CD8-positive, alpha-beta T cell (primary cell): ENCODE measurements at regions of chr1 and their contacts with region 1.

Region 1: GRCh38 chr1:153990468-153991150 is at the start of gene RPS27:
- DNase-seq: peak; percentile 72 to 98 (median 85)
- ATAC-seq: peak; percentile 85
- H3K4me3 ChIP-seq: peak within 1 kb of the TSS; percentile 95 to 97
- H3K4me3 Mint-ChIP-seq: peak within 1 kb of the TSS; percentile 98
- H3K27ac ChIP-seq: peak within 1 kb of the TSS; percentile 98 to 99
- H3K27ac Mint-ChIP-seq: peak within 1 kb of the TSS; percentile 99
- H3K4me1 ChIP-seq: peaks cover 43% of the 10 kb centered on the region
- H3K4me1 Mint-ChIP-seq: peaks cover 44% of the 10 kb centered on the region
- H3K27me3 ChIP-seq: no peaks in the 10 kb centered on the region
- H3K27me3 Mint-ChIP-seq: no peaks in the 10 kb centered on the region
- CTCF ChIP-seq: no peak
- total RNA-seq, gene RPS27: 6,306 to 6,659 TPM

Region 2: DNA sequence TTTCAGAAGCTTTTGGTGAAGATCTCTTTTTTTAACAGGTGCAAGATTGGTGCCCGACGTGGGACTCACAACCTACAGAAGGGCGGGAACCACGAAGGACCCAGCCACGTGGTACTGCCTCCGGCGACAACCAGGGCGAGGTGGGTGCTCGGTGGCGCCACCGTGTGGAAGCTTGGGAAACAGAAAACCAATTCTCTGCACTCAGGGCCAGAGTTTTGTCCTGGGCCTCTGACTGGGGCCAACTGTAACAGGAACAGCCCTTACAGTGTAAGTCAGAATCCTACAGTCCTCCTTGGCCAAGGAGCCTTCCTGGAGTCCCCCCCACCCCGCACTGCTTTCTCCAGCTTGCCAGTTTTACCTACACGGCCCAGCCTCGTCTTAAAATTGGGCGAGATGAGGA is 585.8 kb before region 1 on chr1:
- CTCF ChIA-PET with region 1: no interaction called
- POLR2A ChIA-PET with region 1: no interaction called
- intact Hi-C with region 1: no loop called
- DNase-seq: peak; percentile 12 to 64 (median 45)
- ATAC-seq: peak; percentile 55
- H3K4me3 ChIP-seq: no peak overlapping the region
- H3K4me3 Mint-ChIP-seq: no peak overlapping the region
- H3K27ac ChIP-seq: no peak overlapping the region
- H3K27ac Mint-ChIP-seq: no peak overlapping the region
- H3K4me1 ChIP-seq: peaks cover 8% of the 10 kb centered on the region
- H3K4me1 Mint-ChIP-seq: peaks cover 24% of the 10 kb centered on the region
- H3K27me3 ChIP-seq: no peaks in the 10 kb centered on the region
- H3K27me3 Mint-ChIP-seq: peaks cover 18% of the 10 kb centered on the region
- CTCF ChIP-seq: peak; percentile 46

Region 3: GRCh38 chr1:153503766-153504478 is 486.7 kb before region 1 on chr1:
- CTCF ChIA-PET with region 1: no interaction called
- POLR2A ChIA-PET with region 1: no interaction called
- intact Hi-C with region 1: no loop called
- DNase-seq: no peak
- ATAC-seq: no peak
- H3K4me3 ChIP-seq: no peak overlapping the region
- H3K4me3 Mint-ChIP-seq: no peak overlapping the region
- H3K27ac ChIP-seq: no peak overlapping the region
- H3K27ac Mint-ChIP-seq: no peak overlapping the region
- H3K4me1 ChIP-seq: no peaks in the 10 kb centered on the region
- H3K4me1 Mint-ChIP-seq: no peaks in the 10 kb centered on the region
- H3K27me3 ChIP-seq: peaks cover 0 to 1% of the 10 kb centered on the region in 2 experiments
- H3K27me3 Mint-ChIP-seq: peaks cover 10% of the 10 kb centered on the region
- CTCF ChIP-seq: no peak

Region 4: GRCh38 chr1:153670859-153671627 is 319.6 kb before region 1 on chr1 and contains the start of gene ILF2:
- CTCF ChIA-PET with region 1: interaction called, 4 read pairs
- POLR2A ChIA-PET with region 1: interaction called, 3 read pairs
- intact Hi-C with region 1: loop called in 1 of 2 experiments (anchors 2 kb)
- DNase-seq: peak; percentile 89 to 99 (median 97)
- ATAC-seq: peak; percentile 87
- H3K4me3 ChIP-seq: peak within 1 kb of the TSS; percentile 76 to 81
- H3K4me3 Mint-ChIP-seq: no peak within 1 kb of the TSS
- H3K27ac ChIP-seq: peak within 1 kb of the TSS; percentile 89 to 94
- H3K27ac Mint-ChIP-seq: peak within 1 kb of the TSS; percentile 67
- H3K4me1 ChIP-seq: peaks cover 22% of the 10 kb centered on the region
- H3K4me1 Mint-ChIP-seq: peaks cover 20% of the 10 kb centered on the region
- H3K27me3 ChIP-seq: no peaks in the 10 kb centered on the region
- H3K27me3 Mint-ChIP-seq: peaks cover under 1% of the 10 kb centered on the region
- CTCF ChIP-seq: no peak
- total RNA-seq, gene ILF2: 150 to 156 TPM

Region 5: GRCh38 chr1:153790966-153791647 is 199.5 kb before region 1 on chr1:
- CTCF ChIA-PET with region 1: interaction called, 73 read pairs
- POLR2A ChIA-PET with region 1: interaction called, 9 read pairs
- intact Hi-C with region 1: no loop called
- DNase-seq: peak in 2 of 9 experiments; percentile 46 to 59
- ATAC-seq: peak; percentile 72
- H3K4me3 ChIP-seq: no peak overlapping the region
- H3K4me3 Mint-ChIP-seq: no peak overlapping the region
- H3K27ac ChIP-seq: peak overlapping the region in 1 of 2 experiments; percentile 59
- H3K27ac Mint-ChIP-seq: no peak overlapping the region
- H3K4me1 ChIP-seq: peaks cover 25% of the 10 kb centered on the region
- H3K4me1 Mint-ChIP-seq: peaks cover 27% of the 10 kb centered on the region
- H3K27me3 ChIP-seq: no peaks in the 10 kb centered on the region
- H3K27me3 Mint-ChIP-seq: peaks cover 3% of the 10 kb centered on the region
- CTCF ChIP-seq: no peak

Region 6: GRCh38 chr1:153827168-153827964 is 163.2 kb before region 1 on chr1:
- CTCF ChIA-PET with region 1: interaction called, 10 read pairs
- POLR2A ChIA-PET with region 1: interaction called, 6 read pairs
- intact Hi-C with region 1: no loop called
- DNase-seq: no peak
- ATAC-seq: no peak
- H3K4me3 ChIP-seq: no peak overlapping the region
- H3K4me3 Mint-ChIP-seq: no peak overlapping the region
- H3K27ac ChIP-seq: no peak overlapping the region
- H3K27ac Mint-ChIP-seq: peak overlapping the region; percentile 16
- H3K4me1 ChIP-seq: peaks cover 6% of the 10 kb centered on the region
- H3K4me1 Mint-ChIP-seq: peaks cover 6% of the 10 kb centered on the region
- H3K27me3 ChIP-seq: no peaks in the 10 kb centered on the region
- H3K27me3 Mint-ChIP-seq: no peaks in the 10 kb centered on the region
- CTCF ChIP-seq: no peak

Region 7: GRCh38 chr1:153967082-153968000 is 23.3 kb before region 1 on chr1 and contains the start of gene CREB3L4:
- CTCF ChIA-PET with region 1: interaction called, 32 read pairs
- POLR2A ChIA-PET with region 1: interaction called, 38 read pairs
- intact Hi-C with region 1: loop called (anchors 1 kb)
- DNase-seq: peak; percentile 62 to 97 (median 81)
- ATAC-seq: peak; percentile 84
- H3K4me3 ChIP-seq: peak within 1 kb of the TSS; percentile 77 to 79
- H3K4me3 Mint-ChIP-seq: peak within 1 kb of the TSS; percentile 86
- H3K27ac ChIP-seq: peak within 1 kb of the TSS; percentile 66 to 78
- H3K27ac Mint-ChIP-seq: peak within 1 kb of the TSS; percentile 95
- H3K4me1 ChIP-seq: peaks cover 41% of the 10 kb centered on the region
- H3K4me1 Mint-ChIP-seq: peaks cover 51% of the 10 kb centered on the region
- H3K27me3 ChIP-seq: no peaks in the 10 kb centered on the region
- H3K27me3 Mint-ChIP-seq: no peaks in the 10 kb centered on the region
- CTCF ChIP-seq: peak; percentile 15
- total RNA-seq, gene CREB3L4: 3.0 to 3.7 TPM

Region 8: DNA sequence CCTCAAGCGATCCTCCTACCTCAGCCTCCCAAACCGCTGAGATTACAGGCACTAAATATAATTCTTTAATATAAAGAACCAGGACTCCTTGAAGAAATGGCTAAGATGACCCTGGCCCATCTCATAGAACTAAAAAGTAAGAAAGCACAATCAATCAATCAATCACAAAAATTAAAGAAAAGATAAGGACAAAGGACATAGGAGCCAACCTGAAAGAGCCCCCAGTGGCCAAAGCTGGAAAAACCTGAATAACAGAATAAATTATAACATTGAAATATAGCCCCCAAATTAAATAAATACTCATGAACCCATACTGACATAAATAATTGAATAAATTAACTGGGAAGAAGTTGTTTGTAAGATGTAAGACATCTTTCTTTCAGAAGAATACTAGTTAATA is 155.4 kb after region 1 on chr1:
- CTCF ChIA-PET with region 1: no interaction called
- POLR2A ChIA-PET with region 1: no interaction called
- intact Hi-C with region 1: no loop called
- DNase-seq: peak in 2 of 9 experiments; percentile 11 to 20
- ATAC-seq: no peak
- H3K4me3 ChIP-seq: no peak overlapping the region
- H3K4me3 Mint-ChIP-seq: no peak overlapping the region
- H3K27ac ChIP-seq: no peak overlapping the region
- H3K27ac Mint-ChIP-seq: no peak overlapping the region
- H3K4me1 ChIP-seq: no peaks in the 10 kb centered on the region
- H3K4me1 Mint-ChIP-seq: peaks cover 8% of the 10 kb centered on the region
- H3K27me3 ChIP-seq: no peaks in the 10 kb centered on the region
- H3K27me3 Mint-ChIP-seq: no peaks in the 10 kb centered on the region
- CTCF ChIP-seq: peak; percentile 42

Region 9: GRCh38 chr1:154220071-154220969 is 229.7 kb after region 1 on chr1 and contains the start of gene UBAP2L:
- CTCF ChIA-PET with region 1: interaction called, 3 read pairs
- POLR2A ChIA-PET with region 1: interaction called, 14 read pairs
- intact Hi-C with region 1: loop called (anchors 1 kb)
- DNase-seq: peak; percentile 97 to 100 (median 99)
- ATAC-seq: peak; percentile 82
- H3K4me3 ChIP-seq: peak within 1 kb of the TSS; percentile 68 to 93
- H3K4me3 Mint-ChIP-seq: peak within 1 kb of the TSS; percentile 95
- H3K27ac ChIP-seq: peak within 1 kb of the TSS; percentile 93 to 99
- H3K27ac Mint-ChIP-seq: peak within 1 kb of the TSS; percentile 99
- H3K4me1 ChIP-seq: peaks cover 54% of the 10 kb centered on the region
- H3K4me1 Mint-ChIP-seq: peaks cover 71% of the 10 kb centered on the region
- H3K27me3 ChIP-seq: no peaks in the 10 kb centered on the region
- H3K27me3 Mint-ChIP-seq: no peaks in the 10 kb centered on the region
- CTCF ChIP-seq: no peak
- total RNA-seq, gene UBAP2L: 212 to 226 TPM